ENCODE measurements at regions of chr5 and their contacts with region 1.

Region 1: GRCh38 chr5:178279725-178280438 is 47.3 kb upstream of the PHYKPL start:
- DNase-seq: peak; percentile 82 to 98 (median 93)

Region 2: GRCh38 chr5:178461004-178461730 is 181.3 kb after region 1 on chr5:
- intact Hi-C with region 1: loop called (anchors 10 kb)
- DNase-seq: peak; percentile 36 to 93 (median 78)

Region 3: GRCh38 chr5:178551059-178551458 is 271.2 kb after region 1 on chr5:
- intact Hi-C with region 1: loop called (anchors 5 kb)
- DNase-seq: no peak

Region 4: DNA sequence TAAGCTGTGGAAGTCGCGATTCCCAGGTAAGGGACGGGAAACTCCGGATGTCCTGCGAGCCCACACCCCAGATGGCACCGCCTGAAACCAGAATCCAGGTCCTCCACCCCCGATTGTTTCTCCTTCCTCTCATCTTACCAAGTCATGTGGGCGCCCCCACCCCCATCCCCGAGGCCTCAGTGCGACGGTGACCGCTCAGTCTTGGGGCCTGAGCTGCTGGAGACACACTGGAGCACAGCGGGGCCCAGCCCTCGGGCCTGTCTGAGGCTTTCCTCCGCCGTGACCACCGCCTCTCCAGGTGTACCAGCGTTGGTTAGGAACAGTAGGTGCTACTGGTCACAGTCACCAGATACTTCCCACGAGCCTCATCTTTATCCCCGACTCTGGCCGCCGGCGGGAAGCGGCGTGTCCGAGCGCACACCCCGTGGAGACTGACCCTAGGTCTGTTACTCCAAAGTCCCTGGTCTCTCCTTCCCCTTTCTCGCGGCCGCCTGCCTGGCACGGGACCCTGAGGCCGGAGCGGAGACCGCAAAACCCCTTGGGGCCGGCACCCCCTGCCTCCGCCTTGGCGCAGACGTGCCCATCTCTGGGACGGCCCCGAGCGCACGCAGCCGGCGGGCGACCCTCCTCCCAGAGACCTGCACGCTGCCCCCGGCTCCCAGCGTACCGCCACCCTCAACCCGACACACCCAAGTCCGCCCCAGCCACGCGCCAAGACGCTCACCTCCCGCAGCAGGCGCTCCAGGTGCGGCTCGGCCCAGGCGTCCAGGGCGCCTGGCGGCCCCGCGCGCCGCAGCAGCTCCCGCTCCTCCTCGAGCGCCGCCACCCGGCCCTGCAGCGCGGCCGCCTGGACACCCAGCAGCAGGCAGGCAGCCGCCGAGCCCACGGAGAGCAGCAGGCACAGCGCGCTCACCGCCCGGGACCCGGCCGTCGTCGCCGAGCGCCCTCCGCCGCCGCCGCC is 309.6 kb after region 1 on chr5:
- intact Hi-C with region 1: loop called (anchors 10 kb)
- DNase-seq: peak in 7 of 42 donors; percentile 7 to 43 (median 18)